ENCODE measurements at regions of chr6 and their contacts with region 1.

Region 1: GRCh38 chr6:31403283-31403989 is at the start of gene MICA:
- DNase-seq: peak; percentile 25 to 82 (median 54)
- ATAC-seq: peak; percentile 38
- H3K4me3 ChIP-seq: peak within 1 kb of the TSS; percentile 76
- H3K4me3 Mint-ChIP-seq: peak within 1 kb of the TSS; percentile 92
- H3K27ac ChIP-seq: peak within 1 kb of the TSS; percentile 33 to 50
- H3K27ac Mint-ChIP-seq: peak within 1 kb of the TSS; percentile 81
- H3K4me1 ChIP-seq: peaks cover 51% of the 10 kb centered on the region
- H3K4me1 Mint-ChIP-seq: peaks cover 75% of the 10 kb centered on the region
- H3K27me3 ChIP-seq: no peaks in the 10 kb centered on the region
- H3K27me3 Mint-ChIP-seq: no peaks in the 10 kb centered on the region
- CTCF ChIP-seq: no peak
- total RNA-seq, gene MICA: 10.6 to 14.0 TPM

Region 2: GRCh38 chr6:31419842-31420241 is 16.4 kb after region 1 on chr6:
- CTCF ChIA-PET with region 1: no interaction called
- POLR2A ChIA-PET with region 1: interaction called, 4 read pairs
- intact Hi-C with region 1: loop called in 1 of 2 experiments (anchors 2 kb)
- DNase-seq: no peak
- ATAC-seq: no peak
- H3K4me3 ChIP-seq: no peak overlapping the region
- H3K4me3 Mint-ChIP-seq: no peak overlapping the region
- H3K27ac ChIP-seq: no peak overlapping the region
- H3K27ac Mint-ChIP-seq: no peak overlapping the region
- H3K4me1 ChIP-seq: no peaks in the 10 kb centered on the region
- H3K4me1 Mint-ChIP-seq: peaks cover 14% of the 10 kb centered on the region
- H3K27me3 ChIP-seq: no peaks in the 10 kb centered on the region
- H3K27me3 Mint-ChIP-seq: no peaks in the 10 kb centered on the region
- CTCF ChIP-seq: no peak

Region 3: DNA sequence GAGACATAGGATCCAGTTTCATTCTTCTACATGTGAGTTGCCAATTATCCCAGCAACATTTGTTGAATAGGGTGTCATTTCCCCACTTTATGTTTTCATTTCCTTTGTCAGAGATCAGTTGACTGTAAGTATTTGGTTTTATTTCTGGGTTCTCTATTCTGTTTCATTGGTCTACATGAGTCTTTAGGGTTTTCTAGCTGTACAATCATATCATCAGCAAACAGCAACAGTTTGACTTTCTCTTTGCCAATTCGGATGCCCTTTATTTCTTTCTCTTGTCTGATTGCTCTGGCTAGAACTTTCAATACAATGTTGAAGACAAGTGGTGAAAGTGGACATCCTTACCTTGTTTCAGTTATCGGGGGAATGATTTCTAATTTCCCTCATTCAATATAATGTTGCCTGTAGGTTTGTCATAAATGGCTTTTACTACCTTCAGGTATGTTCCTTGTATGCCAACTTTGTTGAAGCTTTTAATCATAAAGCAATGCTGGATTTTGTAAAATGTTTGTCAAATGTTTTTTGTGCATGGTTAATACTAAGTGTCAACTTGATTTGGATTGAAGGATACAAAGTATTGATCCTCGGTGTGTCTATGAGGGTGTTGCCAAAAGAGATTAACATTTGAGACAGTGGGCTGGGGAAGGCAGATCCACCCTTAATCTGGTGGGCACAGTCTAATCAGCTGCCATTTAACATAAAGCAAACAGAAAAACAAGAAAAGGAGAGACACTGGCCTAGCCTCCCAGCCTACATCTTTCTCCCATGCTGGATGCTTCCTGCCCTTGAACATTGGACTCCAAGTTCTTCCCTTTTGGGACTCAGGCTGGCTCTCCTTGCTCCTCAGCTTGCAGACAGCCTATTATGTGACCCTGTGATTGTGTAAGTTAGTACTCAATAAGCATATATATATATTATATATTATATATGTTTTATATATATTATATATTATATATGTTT is 23.2 kb after region 1 on chr6:
- CTCF ChIA-PET with region 1: interaction called, 5 read pairs
- POLR2A ChIA-PET with region 1: interaction called, 10 read pairs
- intact Hi-C with region 1: loop called in 1 of 2 experiments (anchors 2 kb)
- DNase-seq: no peak
- ATAC-seq: peak; percentile 44
- H3K4me3 ChIP-seq: no peak overlapping the region
- H3K4me3 Mint-ChIP-seq: no peak overlapping the region
- H3K27ac ChIP-seq: no peak overlapping the region
- H3K27ac Mint-ChIP-seq: no peak overlapping the region
- H3K4me1 ChIP-seq: no peaks in the 10 kb centered on the region
- H3K4me1 Mint-ChIP-seq: peaks cover 9% of the 10 kb centered on the region
- H3K27me3 ChIP-seq: no peaks in the 10 kb centered on the region
- H3K27me3 Mint-ChIP-seq: no peaks in the 10 kb centered on the region
- CTCF ChIP-seq: no peak

Measured in CD4-positive, alpha-beta T cell (primary cell).